ENCODE measurements at regions of chr16 and their contacts with region 1.

Region 1: GRCh38 chr16:56530872-56531271 is 11.0 kb upstream of the BBS2 start:
- DNase-seq: no peak
- H3K4me3 ChIP-seq: no peak overlapping the region
- H3K4me3 Mint-ChIP-seq: no peak overlapping the region
- H3K27ac ChIP-seq: no peak overlapping the region
- H3K27ac Mint-ChIP-seq: peak overlapping the region in 1 of 7 donors; percentile 85
- H3K4me1 ChIP-seq: no peaks in the 10 kb centered on the region
- H3K4me1 Mint-ChIP-seq: no peaks in the 10 kb centered on the region
- H3K27me3 ChIP-seq: peaks cover 2% of the 10 kb centered on the region
- H3K27me3 Mint-ChIP-seq: peaks cover 6 to 7% of the 10 kb centered on the region in 2 donors

Region 2: GRCh38 chr16:56519459-56520250 is 11.2 kb before region 1 on chr16 and contains the start of gene BBS2:
- CTCF ChIA-PET with region 1: interaction called, 12 read pairs
- POLR2A ChIA-PET with region 1: interaction called, 4 read pairs
- intact Hi-C with region 1: no loop called
- DNase-seq: peak; percentile 88 to 92 (median 91)
- H3K4me3 ChIP-seq: peak within 1 kb of the TSS; percentile 63 to 93
- H3K4me3 Mint-ChIP-seq: peak within 1 kb of the TSS; percentile 86 to 90 (median 88)
- H3K27ac ChIP-seq: peak within 1 kb of the TSS; percentile 73
- H3K27ac Mint-ChIP-seq: peak within 1 kb of the TSS; percentile 82 to 93 (median 92)
- H3K4me1 ChIP-seq: peaks cover 37% of the 10 kb centered on the region
- H3K4me1 Mint-ChIP-seq: peaks cover 37 to 59% (median 44%) of the 10 kb centered on the region in 4 donors
- H3K27me3 ChIP-seq: no peaks in the 10 kb centered on the region
- H3K27me3 Mint-ChIP-seq: no peaks in the 10 kb centered on the region
- total RNA-seq, gene BBS2: 95.8 to 96.0 TPM

Measured in CD4-positive, alpha-beta memory T cell (primary cell).